ENCODE measurements at regions of chr17 and their contacts with region 1.

Region 1: GRCh38 chr17:38898812-38899348 is 26.5 kb upstream of the LASP1NB start:
- DNase-seq: peak; percentile 98
- ATAC-seq: peak; percentile 89
- H3K4me3 Mint-ChIP-seq: peak overlapping the region; percentile 72
- H3K27ac Mint-ChIP-seq: peak overlapping the region; percentile 99
- H3K4me1 Mint-ChIP-seq: peaks cover 67% of the 10 kb centered on the region
- H3K27me3 Mint-ChIP-seq: no peaks in the 10 kb centered on the region
- CTCF ChIP-seq: no peak

Region 2: GRCh38 chr17:38815576-38816193 is 83.2 kb before region 1 on chr17:
- CTCF ChIA-PET with region 1: no interaction called
- POLR2A ChIA-PET with region 1: no interaction called
- intact Hi-C with region 1: no loop called
- DNase-seq: peak; percentile 46
- ATAC-seq: peak; percentile 83
- H3K4me3 Mint-ChIP-seq: no peak overlapping the region
- H3K27ac Mint-ChIP-seq: peak overlapping the region; percentile 37
- H3K4me1 Mint-ChIP-seq: peaks cover 10% of the 10 kb centered on the region
- H3K27me3 Mint-ChIP-seq: no peaks in the 10 kb centered on the region
- CTCF ChIP-seq: peak; percentile 29

Region 3: DNA sequence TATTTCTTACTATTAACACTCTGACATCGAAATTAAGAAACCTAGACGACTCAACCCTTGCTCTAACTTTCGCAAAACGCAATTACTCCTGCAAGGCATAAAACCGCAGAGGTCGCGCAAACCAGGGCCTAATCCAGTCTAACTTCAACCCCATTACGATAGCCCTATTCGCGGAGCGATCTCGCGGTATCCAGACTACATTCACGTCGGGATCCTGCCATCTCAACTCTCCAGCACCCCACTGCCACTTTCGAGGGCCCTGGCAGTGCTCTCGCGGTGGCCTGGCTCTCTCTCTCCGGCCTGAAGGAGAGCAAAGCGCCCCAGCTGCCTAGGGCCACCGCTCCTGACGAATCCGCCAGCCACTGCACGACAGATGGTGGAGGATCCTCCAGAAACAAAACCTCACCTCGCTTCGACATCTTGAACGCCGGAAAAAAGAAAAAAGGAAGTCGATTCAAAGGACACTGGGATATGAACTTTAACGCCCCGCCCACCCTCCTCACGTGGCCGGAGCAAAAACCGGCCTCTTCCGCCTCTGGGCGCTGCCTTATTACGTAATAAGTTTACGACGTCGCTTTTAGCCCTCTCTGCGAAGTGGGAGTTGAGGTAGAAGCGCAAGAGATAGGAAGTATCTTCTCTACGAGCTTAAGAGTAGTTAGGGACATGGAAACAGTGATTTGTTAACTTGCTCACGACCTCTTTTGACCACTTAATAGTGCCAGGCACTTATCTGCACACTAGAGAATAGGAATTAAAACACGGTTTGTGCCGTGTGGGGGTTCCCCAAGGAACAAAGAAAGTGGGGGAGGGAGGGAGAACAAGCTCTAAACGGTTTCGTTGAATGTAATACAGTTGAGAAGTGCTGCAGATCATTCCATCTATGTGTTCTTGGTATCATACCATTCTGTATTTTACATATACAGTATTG is 45.3 kb before region 1 on chr17 and contains the start of gene RPL23:
- CTCF ChIA-PET with region 1: no interaction called
- POLR2A ChIA-PET with region 1: interaction called, 23 read pairs
- intact Hi-C with region 1: no loop called
- DNase-seq: peak; percentile 97
- ATAC-seq: peak; percentile 88
- H3K4me3 Mint-ChIP-seq: peak within 1 kb of the TSS; percentile 99
- H3K27ac Mint-ChIP-seq: peak within 1 kb of the TSS; percentile 99
- H3K4me1 Mint-ChIP-seq: peaks cover 40% of the 10 kb centered on the region
- H3K27me3 Mint-ChIP-seq: no peaks in the 10 kb centered on the region
- CTCF ChIP-seq: no peak
- total RNA-seq, gene RPL23: 1,908 to 1,957 TPM

Region 4: DNA sequence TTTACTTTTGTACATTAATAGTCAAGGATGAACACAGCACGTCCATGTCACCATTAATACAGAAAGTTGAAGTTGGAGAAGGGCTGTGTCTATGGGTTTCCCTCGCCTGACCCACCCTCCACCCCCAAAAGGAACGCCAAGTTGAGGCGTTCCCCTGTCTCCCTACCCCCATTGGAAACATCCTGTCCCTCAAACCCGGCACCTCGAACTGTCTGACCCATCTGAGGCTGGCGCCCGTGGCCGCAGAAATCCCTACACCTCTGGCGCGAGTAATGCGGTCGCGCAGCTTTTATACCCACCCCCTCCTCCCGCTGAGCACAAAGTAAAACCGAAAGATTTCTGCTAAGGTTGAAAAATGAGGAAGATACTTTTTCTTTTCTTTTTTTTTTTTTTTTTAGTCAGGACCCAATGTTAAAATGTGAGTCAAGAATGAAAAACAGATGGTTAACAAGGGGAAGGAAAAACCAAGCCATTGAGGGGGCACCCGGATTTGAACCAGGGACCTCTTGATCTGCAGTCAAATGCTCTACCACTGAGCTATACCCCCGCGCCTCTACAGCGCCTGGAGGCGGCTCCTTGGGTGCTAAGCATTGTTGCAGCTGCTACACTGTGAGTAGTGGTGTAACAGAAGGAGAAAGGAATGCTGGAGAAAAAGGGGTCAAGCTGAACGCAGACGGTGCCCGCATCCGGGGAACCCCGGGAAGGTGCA is 29.9 kb before region 1 on chr17:
- CTCF ChIA-PET with region 1: interaction called, 25 read pairs
- POLR2A ChIA-PET with region 1: interaction called, 55 read pairs
- intact Hi-C with region 1: loop called (anchors 1 kb)
- DNase-seq: peak; percentile 94
- ATAC-seq: peak; percentile 48
- H3K4me3 Mint-ChIP-seq: peak overlapping the region; percentile 90
- H3K27ac Mint-ChIP-seq: peak overlapping the region; percentile 98
- H3K4me1 Mint-ChIP-seq: peaks cover 40% of the 10 kb centered on the region
- H3K27me3 Mint-ChIP-seq: peaks cover 1% of the 10 kb centered on the region
- CTCF ChIP-seq: no peak

Region 5: DNA sequence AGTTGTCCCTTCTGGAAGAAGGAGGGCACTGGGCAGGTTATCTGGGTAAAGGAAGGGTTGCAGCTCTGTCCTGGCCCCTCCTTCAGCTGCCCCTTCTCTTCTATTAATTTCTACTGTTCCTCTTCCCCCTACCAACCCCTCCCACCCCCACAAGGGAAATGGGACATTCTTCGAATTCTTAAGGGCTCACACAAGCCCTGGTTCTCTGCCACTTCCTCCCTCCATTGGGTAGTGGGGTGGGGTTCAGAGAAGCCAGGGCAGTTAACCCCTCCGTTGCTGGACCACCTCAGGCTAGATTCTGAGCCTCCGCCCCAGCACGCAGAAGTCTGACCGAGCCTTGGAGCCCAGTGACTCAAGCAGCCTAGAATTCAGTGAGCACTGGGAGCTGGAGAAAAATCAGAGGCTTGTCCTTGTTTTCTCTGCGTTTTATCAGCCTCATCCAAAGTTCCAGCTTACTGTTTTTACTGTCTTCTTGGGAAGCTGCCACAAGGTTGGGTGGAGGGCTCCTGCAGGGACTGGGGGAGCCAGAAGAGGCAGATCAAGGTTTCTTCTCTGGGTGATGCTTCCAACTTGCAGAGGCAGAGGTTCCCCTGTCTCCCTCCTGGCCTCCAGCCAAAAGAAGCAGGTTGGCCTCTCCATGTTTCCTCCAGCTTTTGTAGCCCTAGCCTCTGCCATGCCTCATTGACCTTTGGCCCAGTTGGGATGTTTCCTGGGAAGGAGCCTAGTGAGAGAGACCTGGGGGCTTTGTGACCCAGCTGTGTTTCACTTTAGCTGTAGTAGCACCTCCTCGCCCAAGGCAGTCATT is 18.8 kb before region 1 on chr17:
- CTCF ChIA-PET with region 1: interaction called, 9 read pairs
- POLR2A ChIA-PET with region 1: interaction called, 55 read pairs
- intact Hi-C with region 1: no loop called
- DNase-seq: peak; percentile 46
- ATAC-seq: no peak
- H3K4me3 Mint-ChIP-seq: peak overlapping the region; percentile 44
- H3K27ac Mint-ChIP-seq: peak overlapping the region; percentile 85
- H3K4me1 Mint-ChIP-seq: peaks cover 86% of the 10 kb centered on the region
- H3K27me3 Mint-ChIP-seq: no peaks in the 10 kb centered on the region
- CTCF ChIP-seq: no peak

Region 6: GRCh38 chr17:38885728-38886561 is 12.9 kb before region 1 on chr17:
- CTCF ChIA-PET with region 1: interaction called, 9 read pairs
- POLR2A ChIA-PET with region 1: interaction called, 53 read pairs
- intact Hi-C with region 1: no loop called
- DNase-seq: no peak
- ATAC-seq: no peak
- H3K4me3 Mint-ChIP-seq: peak overlapping the region; percentile 12
- H3K27ac Mint-ChIP-seq: peak overlapping the region; percentile 43
- H3K4me1 Mint-ChIP-seq: peaks cover 86% of the 10 kb centered on the region
- H3K27me3 Mint-ChIP-seq: no peaks in the 10 kb centered on the region
- CTCF ChIP-seq: no peak

Region 7: GRCh38 chr17:38912221-38912813 is 13.4 kb after region 1 on chr17:
- CTCF ChIA-PET with region 1: interaction called, 5 read pairs
- POLR2A ChIA-PET with region 1: interaction called, 25 read pairs
- intact Hi-C with region 1: no loop called
- DNase-seq: no peak
- ATAC-seq: no peak
- H3K4me3 Mint-ChIP-seq: no peak overlapping the region
- H3K27ac Mint-ChIP-seq: peak overlapping the region; percentile 26
- H3K4me1 Mint-ChIP-seq: peaks cover 27% of the 10 kb centered on the region
- H3K27me3 Mint-ChIP-seq: no peaks in the 10 kb centered on the region
- CTCF ChIP-seq: no peak

Region 8: GRCh38 chr17:38922538-38923297 is 23.8 kb after region 1 on chr17:
- CTCF ChIA-PET with region 1: interaction called, 21 read pairs
- POLR2A ChIA-PET with region 1: interaction called, 8 read pairs
- intact Hi-C with region 1: loop called (anchors 5 kb)
- DNase-seq: no peak
- ATAC-seq: no peak
- H3K4me3 Mint-ChIP-seq: no peak overlapping the region
- H3K27ac Mint-ChIP-seq: peak overlapping the region; percentile 62
- H3K4me1 Mint-ChIP-seq: peaks cover 53% of the 10 kb centered on the region
- H3K27me3 Mint-ChIP-seq: no peaks in the 10 kb centered on the region
- CTCF ChIP-seq: no peak

Measured in activated CD8-positive, alpha-beta T cell treated with anti-CD3 and anti-CD28 coated beads for 36 hours (primary cell).